Activated B cell treated with CpG ODN at 0.5 μM for 24 hours (primary cell): ENCODE measurements at regions of chrX and their contacts with region 1.

Region 1: DNA sequence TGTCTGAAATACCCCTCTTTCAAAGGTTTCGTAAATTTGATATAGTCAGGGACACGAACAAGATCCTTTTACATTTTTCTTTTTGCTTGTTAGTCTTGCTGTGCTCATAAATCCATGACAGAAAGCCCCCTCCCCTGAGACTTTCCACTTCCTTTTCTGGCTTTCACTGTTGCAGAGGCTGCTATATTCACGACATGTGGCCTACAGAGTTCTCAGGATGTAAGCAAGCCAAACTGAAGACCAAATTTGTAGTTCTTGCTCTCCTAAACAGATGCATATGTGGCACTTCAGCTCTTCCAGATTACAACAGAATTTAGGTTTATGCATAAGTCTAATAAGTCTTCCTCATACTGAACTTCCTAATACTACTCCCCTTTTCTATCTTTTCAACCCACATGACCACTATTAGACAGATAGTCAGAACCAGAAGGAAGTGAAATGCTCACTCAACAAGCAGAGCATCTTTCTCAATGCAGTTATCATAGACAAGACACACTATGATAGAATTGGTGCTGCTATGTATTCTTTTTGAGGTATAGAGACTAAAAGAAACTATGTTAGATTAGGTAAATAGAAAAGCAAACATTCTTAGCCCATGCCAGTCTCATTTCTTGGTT is 15.0 kb downstream of the BTK start:
- DNase-seq: no peak
- ATAC-seq: peak; percentile 85
- H3K4me3 Mint-ChIP-seq: peak overlapping the region; percentile 64
- H3K27ac Mint-ChIP-seq: peak overlapping the region; percentile 81
- H3K4me1 Mint-ChIP-seq: peaks cover 52% of the 10 kb centered on the region
- H3K27me3 Mint-ChIP-seq: no peaks in the 10 kb centered on the region
- CTCF ChIP-seq: no peak

Region 2: GRCh38 chrX:101303790-101304189 is 67.2 kb before region 1 on chrX:
- CTCF ChIA-PET with region 1: no interaction called
- POLR2A ChIA-PET with region 1: no interaction called
- intact Hi-C with region 1: no loop called
- DNase-seq: no peak
- ATAC-seq: no peak
- H3K4me3 Mint-ChIP-seq: no peak overlapping the region
- H3K27ac Mint-ChIP-seq: no peak overlapping the region
- H3K4me1 Mint-ChIP-seq: peaks cover 17% of the 10 kb centered on the region
- H3K27me3 Mint-ChIP-seq: no peaks in the 10 kb centered on the region
- CTCF ChIP-seq: no peak

Region 3: GRCh38 chrX:101348452-101349192 is 22.4 kb before region 1 on chrX and contains the start of gene TIMM8A:
- CTCF ChIA-PET with region 1: no interaction called
- POLR2A ChIA-PET with region 1: no interaction called
- intact Hi-C with region 1: loop called (anchors 2 kb)
- DNase-seq: peak; percentile 71
- ATAC-seq: peak; percentile 99
- H3K4me3 Mint-ChIP-seq: peak within 1 kb of the TSS; percentile 91
- H3K27ac Mint-ChIP-seq: peak within 1 kb of the TSS; percentile 89
- H3K4me1 Mint-ChIP-seq: peaks cover 13% of the 10 kb centered on the region
- H3K27me3 Mint-ChIP-seq: no peaks in the 10 kb centered on the region
- CTCF ChIP-seq: no peak
- total RNA-seq, gene TIMM8A: 16.8 and 17.1 TPM in 2 replicates